Mammary epithelial cell (primary cell): ENCODE measurements at regions of chr6 and their contacts with region 1.

Region 1: GRCh38 chr6:29792123-29793035 is 35.2 kb upstream of the HLA-G start:
- DNase-seq: peak; percentile 48
- H3K4me3 ChIP-seq: peak overlapping the region; percentile 75 to 86 (median 81)
- H3K27ac ChIP-seq: peak overlapping the region; percentile 100
- H3K4me1 ChIP-seq: peaks cover 30% of the 10 kb centered on the region
- H3K27me3 ChIP-seq: no peaks in the 10 kb centered on the region
- CTCF ChIP-seq: peak; percentile 34 to 77

Region 2: GRCh38 chr6:29752451-29753308 is 39.7 kb before region 1 on chr6:
- CTCF ChIA-PET with region 1: interaction called, 6 read pairs
- dilution Hi-C with region 1: loop called (anchors 5 kb)
- in situ Hi-C with region 1: no loop called
- intact Hi-C with region 1: loop called (anchors 1 kb)
- DNase-seq: peak; percentile 92
- H3K4me3 ChIP-seq: peak overlapping the region; percentile 62 to 86 (median 68)
- H3K27ac ChIP-seq: peak overlapping the region; percentile 85
- H3K4me1 ChIP-seq: peaks cover 23% of the 10 kb centered on the region
- H3K27me3 ChIP-seq: no peaks in the 10 kb centered on the region
- CTCF ChIP-seq: peak; percentile 90 to 99

Region 3: DNA sequence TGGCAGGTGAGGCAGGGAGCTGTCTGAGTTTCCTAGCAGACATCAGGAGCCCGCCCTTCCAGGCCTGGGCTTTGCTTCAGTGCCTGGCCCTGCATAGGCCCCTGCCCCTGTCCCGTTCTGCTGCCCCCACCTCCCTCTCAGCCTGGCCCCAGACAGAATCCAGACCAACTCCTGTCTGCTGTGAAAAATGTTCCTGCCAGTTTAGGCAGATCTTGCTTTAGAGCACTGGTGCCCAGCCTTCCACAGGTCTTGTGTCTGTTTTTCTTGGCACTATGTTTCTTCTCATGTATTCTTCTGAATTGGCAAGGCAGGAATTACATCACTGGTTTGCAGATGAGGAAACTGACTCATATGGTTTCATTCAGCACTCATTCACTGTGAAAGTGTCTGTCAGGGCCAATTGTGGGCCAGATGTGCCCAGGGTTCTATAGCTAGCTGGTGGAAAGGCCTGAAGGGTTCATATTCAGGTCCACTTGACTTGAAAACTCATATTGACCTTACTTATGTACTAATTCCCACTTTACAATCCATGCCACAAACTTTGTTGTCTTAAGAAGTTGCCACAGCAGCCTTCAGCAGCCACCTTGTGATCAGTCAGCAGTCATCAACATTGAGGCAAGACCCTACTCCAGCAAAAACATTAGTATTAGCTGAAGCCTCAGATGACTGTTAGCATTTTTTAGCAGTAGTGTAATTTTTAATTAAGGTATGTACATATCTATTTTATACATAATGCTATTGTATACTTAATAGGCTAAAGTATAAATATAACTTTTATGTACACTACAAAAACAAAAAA is 28.7 kb before region 1 on chr6:
- CTCF ChIA-PET with region 1: no interaction called
- dilution Hi-C with region 1: loop called (anchors 5 kb)
- in situ Hi-C with region 1: no loop called
- intact Hi-C with region 1: no loop called
- DNase-seq: peak; percentile 95
- H3K4me3 ChIP-seq: no peak overlapping the region
- H3K27ac ChIP-seq: peak overlapping the region; percentile 81
- H3K4me1 ChIP-seq: peaks cover 41% of the 10 kb centered on the region
- H3K27me3 ChIP-seq: no peaks in the 10 kb centered on the region
- CTCF ChIP-seq: no peak

Region 4: GRCh38 chr6:29827579-29828470 is 35.4 kb after region 1 on chr6 and contains the start of gene HLA-G:
- CTCF ChIA-PET with region 1: no interaction called
- dilution Hi-C with region 1: no loop called
- in situ Hi-C with region 1: no loop called
- intact Hi-C with region 1: loop called (anchors 2 kb)
- DNase-seq: no peak
- H3K4me3 ChIP-seq: peak within 1 kb of the TSS in 1 of 3 experiments; percentile 28
- H3K27ac ChIP-seq: no peak within 1 kb of the TSS
- H3K4me1 ChIP-seq: peaks cover 17% of the 10 kb centered on the region
- H3K27me3 ChIP-seq: peaks cover 2% of the 10 kb centered on the region
- CTCF ChIP-seq: no peak
- total RNA-seq, gene HLA-G: 0.33 TPM in 1 of 2 donors, not detected in the other

Region 5: DNA sequence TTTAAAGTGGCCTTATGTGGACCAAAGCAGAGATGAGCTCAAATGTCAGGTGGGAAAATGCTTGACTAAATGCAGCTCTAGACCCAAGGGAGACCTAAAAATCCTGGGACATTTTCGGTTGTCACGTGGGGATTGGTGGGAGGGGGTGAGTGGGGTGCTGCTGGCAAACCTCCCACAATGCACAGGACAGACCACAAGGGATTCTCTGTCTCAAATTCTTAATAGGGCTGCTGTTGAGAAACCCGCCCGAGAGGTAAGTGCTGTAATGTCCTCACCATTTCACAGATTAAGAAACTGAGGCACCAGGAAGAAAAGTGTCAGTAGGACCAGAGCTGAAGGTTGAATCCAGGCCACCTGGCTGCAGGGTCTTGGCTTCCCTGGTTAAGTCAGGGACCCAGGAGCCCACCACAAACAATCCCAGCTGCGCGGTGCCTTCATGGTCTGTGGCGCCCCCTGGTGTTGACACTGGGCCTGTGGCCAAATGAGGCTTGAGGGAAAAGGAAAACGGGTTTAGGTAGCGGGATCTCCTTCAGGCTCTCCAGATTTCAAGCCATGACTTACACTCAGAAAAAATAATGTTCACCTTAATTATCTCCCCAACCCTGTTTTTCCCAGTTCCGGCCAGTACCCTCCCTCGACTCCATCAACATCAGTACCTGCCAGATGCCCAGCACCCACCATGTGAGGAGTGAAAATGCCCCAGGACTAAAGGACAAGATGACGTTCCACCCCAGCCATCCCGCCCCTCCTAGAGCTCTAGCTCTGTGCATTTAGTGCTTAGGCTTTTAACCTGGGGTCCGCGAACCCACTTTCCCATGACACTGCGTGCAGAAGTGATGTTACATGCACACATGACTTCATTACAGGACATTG is 42.4 kb after region 1 on chr6:
- CTCF ChIA-PET with region 1: no interaction called
- dilution Hi-C with region 1: no loop called
- in situ Hi-C with region 1: no loop called
- intact Hi-C with region 1: loop called (anchors 2 kb)
- DNase-seq: peak; percentile 17
- H3K4me3 ChIP-seq: no peak overlapping the region
- H3K27ac ChIP-seq: no peak overlapping the region
- H3K4me1 ChIP-seq: no peaks in the 10 kb centered on the region
- H3K27me3 ChIP-seq: no peaks in the 10 kb centered on the region
- CTCF ChIP-seq: peak; percentile 72 to 87

Region 6: DNA sequence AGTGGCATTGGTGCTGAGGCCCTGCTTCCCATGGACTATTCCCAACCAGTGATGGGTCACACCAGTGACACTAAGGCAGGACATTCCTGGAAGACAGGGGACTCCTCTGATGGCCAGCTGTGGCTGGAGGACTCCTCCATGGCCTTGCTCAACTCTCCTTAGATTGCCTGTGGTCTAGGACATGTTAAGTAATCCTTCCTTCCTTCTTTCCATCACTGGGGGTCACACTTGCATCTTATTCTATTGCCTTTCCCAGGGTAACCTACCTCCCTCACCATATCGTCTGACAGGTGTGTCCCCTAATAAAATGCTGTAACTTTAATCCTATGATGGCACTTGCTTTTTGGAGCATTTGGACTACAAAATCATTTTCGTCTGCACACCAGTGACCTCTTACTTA is 125.5 kb after region 1 on chr6:
- CTCF ChIA-PET with region 1: no interaction called
- dilution Hi-C with region 1: no loop called
- in situ Hi-C with region 1: no loop called
- intact Hi-C with region 1: no loop called
- DNase-seq: no peak
- H3K4me3 ChIP-seq: no peak overlapping the region
- H3K27ac ChIP-seq: no peak overlapping the region
- H3K4me1 ChIP-seq: no peaks in the 10 kb centered on the region
- H3K27me3 ChIP-seq: no peaks in the 10 kb centered on the region
- CTCF ChIP-seq: no peak

Region 7: GRCh38 chr6:29942275-29943052 is 150.1 kb after region 1 on chr6 and contains the start of gene HLA-A:
- CTCF ChIA-PET with region 1: no interaction called
- dilution Hi-C with region 1: no loop called
- in situ Hi-C with region 1: no loop called
- intact Hi-C with region 1: loop called (anchors 2 kb)
- DNase-seq: peak; percentile 97
- H3K4me3 ChIP-seq: peak within 1 kb of the TSS; percentile 65 to 84 (median 75)
- H3K27ac ChIP-seq: peak within 1 kb of the TSS; percentile 93
- H3K4me1 ChIP-seq: peaks cover 8% of the 10 kb centered on the region
- H3K27me3 ChIP-seq: no peaks in the 10 kb centered on the region
- CTCF ChIP-seq: peak in 1 of 2 donors; percentile 13
- total RNA-seq, gene HLA-A: 217 to 345 TPM

Region 8: GRCh38 chr6:29953001-29953441 is 160.6 kb after region 1 on chr6:
- CTCF ChIA-PET with region 1: no interaction called
- dilution Hi-C with region 1: loop called (anchors 5 kb)
- in situ Hi-C with region 1: no loop called
- intact Hi-C with region 1: no loop called
- DNase-seq: peak; percentile 91
- H3K4me3 ChIP-seq: no peak overlapping the region
- H3K27ac ChIP-seq: no peak overlapping the region
- H3K4me1 ChIP-seq: peaks cover 2% of the 10 kb centered on the region
- H3K27me3 ChIP-seq: no peaks in the 10 kb centered on the region
- CTCF ChIP-seq: no peak